ENCODE measurements at regions of chr12 and their contacts with region 1.

Region 1: DNA sequence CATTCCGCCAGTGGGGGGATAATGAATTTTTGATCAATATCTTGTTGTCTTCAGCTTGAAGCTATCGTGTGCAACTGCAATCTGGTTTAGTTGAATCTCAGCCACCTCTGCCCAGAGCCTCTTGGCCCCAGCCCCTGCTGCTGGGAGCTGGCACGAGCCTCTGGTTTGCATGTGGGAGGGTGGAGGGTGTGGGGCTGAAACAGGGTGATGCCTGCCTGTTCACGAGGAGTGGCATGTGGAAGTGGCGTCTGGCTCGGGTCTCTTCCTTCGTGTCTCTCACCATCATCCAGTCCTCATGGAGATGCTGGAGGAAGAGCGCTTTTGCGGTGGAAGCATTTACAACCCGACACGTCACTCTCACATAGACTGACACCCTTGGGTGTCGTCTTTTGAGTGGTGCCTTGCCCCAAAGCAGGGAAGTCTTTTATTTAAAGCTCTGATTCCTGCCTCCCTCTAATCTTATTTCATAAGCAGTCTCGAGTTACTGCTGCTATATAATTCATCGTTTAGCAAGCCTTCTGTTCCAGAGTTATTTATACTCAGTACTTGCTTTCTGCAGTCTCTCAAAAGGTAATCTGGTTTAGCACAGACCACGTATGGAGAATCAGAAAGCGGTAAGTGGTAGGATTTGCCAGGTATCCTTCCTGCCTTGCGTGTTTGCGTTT is 64.5 kb downstream of the AACS start:
- DNase-seq: no peak
- ATAC-seq: no peak
- H3K4me3 ChIP-seq: no peak overlapping the region
- H3K27ac ChIP-seq: no peak overlapping the region
- H3K4me1 ChIP-seq: peaks cover 11% of the 10 kb centered on the region
- H3K27me3 ChIP-seq: no peaks in the 10 kb centered on the region
- CTCF ChIP-seq: no peak

Region 2: DNA sequence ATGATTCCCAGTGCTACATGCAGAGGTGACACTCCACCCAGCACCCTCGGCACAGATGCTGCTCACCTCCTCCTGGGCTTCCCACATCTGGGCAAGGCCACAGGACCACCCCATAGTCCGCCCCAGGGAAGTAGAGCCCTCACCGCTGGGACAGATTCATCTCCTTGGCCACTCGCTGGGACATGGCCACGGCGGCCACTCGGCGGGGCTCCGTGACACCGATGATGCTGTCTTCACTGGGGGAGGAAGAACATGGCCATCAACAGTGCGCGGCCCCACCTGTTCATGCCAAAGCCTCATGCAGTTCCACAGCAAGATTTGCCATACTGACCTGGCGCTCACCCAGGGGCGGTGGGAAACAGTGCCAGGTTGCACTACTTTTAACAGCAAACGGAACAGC is 154.4 kb before region 1 on chr12:
- CTCF ChIA-PET with region 1: no interaction called
- POLR2A ChIA-PET with region 1: interaction called, 11 read pairs
- intact Hi-C with region 1: no loop called
- DNase-seq: no peak
- ATAC-seq: no peak
- H3K4me3 ChIP-seq: no peak overlapping the region
- H3K27ac ChIP-seq: no peak overlapping the region
- H3K4me1 ChIP-seq: no peaks in the 10 kb centered on the region
- H3K27me3 ChIP-seq: no peaks in the 10 kb centered on the region
- CTCF ChIP-seq: no peak

Region 3: GRCh38 chr12:125287101-125287847 is 157.6 kb after region 1 on chr12:
- CTCF ChIA-PET with region 1: no interaction called
- POLR2A ChIA-PET with region 1: no interaction called
- intact Hi-C with region 1: no loop called
- DNase-seq: no peak
- ATAC-seq: no peak
- H3K4me3 ChIP-seq: no peak overlapping the region
- H3K27ac ChIP-seq: no peak overlapping the region
- H3K4me1 ChIP-seq: no peaks in the 10 kb centered on the region
- H3K27me3 ChIP-seq: peaks cover 88% of the 10 kb centered on the region
- CTCF ChIP-seq: no peak